ENCODE measurements at regions of chr11 and their contacts with region 1.

Region 1: GRCh38 chr11:96342961-96343711 is at the start of gene MAML2:
- DNase-seq: peak; percentile 92
- CTCF ChIP-seq: peak; percentile 78

Region 2: GRCh38 chr11:95849087-95849825 is 493.9 kb before region 1 on chr11:
- CTCF ChIA-PET with region 1: interaction called, 10 read pairs
- POLR2A ChIA-PET with region 1: no interaction called
- DNase-seq: peak; percentile 10
- CTCF ChIP-seq: peak; percentile 48

Region 3: GRCh38 chr11:96082002-96082899 is 260.9 kb before region 1 on chr11:
- CTCF ChIA-PET with region 1: interaction called, 10 read pairs
- POLR2A ChIA-PET with region 1: no interaction called
- DNase-seq: no peak
- CTCF ChIP-seq: no peak

Region 4: GRCh38 chr11:96235751-96236150 is 107.4 kb before region 1 on chr11:
- CTCF ChIA-PET with region 1: interaction called, 16 read pairs
- POLR2A ChIA-PET with region 1: no interaction called
- DNase-seq: no peak
- CTCF ChIP-seq: no peak

Region 5: GRCh38 chr11:96293598-96294021 is 49.5 kb before region 1 on chr11:
- CTCF ChIA-PET with region 1: interaction called, 10 read pairs
- POLR2A ChIA-PET with region 1: interaction called, 4 read pairs
- DNase-seq: peak; percentile 48
- CTCF ChIP-seq: no peak

Region 6: DNA sequence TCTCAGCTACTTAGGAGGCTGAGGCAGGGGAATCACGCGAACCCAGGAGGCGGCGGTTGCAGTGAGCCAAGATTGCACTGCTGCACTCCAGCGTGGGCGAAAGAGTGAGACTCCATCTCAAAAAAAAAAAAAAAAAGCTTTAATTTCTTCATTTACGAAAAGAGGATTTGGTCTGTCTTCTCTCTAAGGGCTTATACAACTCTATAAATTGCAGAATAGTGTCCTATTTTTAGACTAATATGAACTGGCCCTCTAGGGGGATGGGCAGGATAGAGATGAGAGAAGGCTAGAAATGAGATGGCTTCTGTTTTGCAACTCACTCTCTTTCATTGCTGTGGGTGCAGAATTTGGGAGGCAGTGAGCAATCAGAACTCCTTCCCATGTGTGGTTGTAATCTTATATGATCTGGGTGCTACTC is 11.4 kb before region 1 on chr11:
- CTCF ChIA-PET with region 1: interaction called, 31 read pairs
- POLR2A ChIA-PET with region 1: no interaction called
- DNase-seq: no peak
- CTCF ChIP-seq: no peak

Region 7: DNA sequence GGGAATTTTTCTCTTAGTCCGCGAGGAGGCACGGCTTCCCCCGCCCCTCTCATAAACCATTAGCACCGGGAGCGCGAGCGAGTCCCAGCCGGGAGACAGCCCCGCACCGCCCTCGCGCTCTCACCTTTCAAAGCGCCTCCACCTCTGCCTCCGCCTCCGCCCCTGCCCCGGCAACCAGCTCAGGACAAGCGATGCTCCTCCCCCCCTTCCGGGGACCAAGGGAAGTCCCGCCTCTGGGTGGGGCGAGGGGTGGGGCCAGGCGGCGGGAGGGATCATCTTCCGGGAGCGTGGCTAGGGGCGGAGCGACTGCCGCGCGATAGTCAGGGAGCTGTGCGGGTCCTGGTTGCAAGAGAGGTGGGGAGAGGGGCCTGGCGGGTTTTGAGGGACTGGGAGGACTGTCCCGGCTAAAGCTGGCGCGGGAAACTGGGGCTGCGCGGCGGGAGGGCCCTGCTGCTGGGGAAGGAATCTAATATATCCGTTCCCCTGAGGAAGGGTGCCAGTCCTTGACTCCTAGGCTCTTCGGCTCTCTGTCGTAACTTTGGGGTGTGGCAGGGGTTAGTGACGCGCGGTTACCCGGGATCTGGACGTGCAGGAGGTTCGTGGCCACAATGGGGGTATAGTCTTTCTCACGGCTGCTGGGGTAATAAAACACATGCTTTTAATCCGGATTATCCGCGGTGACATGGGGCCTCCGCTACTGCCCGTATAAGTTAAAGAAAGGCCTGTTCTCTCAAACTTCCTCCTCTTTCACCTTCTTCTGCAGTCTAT is 46.8 kb after region 1 on chr11 and contains the starts of genes CCDC82 and JRKL:
- CTCF ChIA-PET with region 1: interaction called, 30 read pairs
- POLR2A ChIA-PET with region 1: no interaction called
- DNase-seq: peak; percentile 98
- CTCF ChIP-seq: no peak

Region 8: GRCh38 chr11:96447208-96448110 is 104.3 kb after region 1 on chr11:
- CTCF ChIA-PET with region 1: no interaction called
- POLR2A ChIA-PET with region 1: no interaction called
- DNase-seq: no peak
- CTCF ChIP-seq: no peak

Measured in GM10248 (cell line).